PC-3 (cell line): ENCODE measurements at regions of chr20 and their contacts with region 1.

Region 1: DNA sequence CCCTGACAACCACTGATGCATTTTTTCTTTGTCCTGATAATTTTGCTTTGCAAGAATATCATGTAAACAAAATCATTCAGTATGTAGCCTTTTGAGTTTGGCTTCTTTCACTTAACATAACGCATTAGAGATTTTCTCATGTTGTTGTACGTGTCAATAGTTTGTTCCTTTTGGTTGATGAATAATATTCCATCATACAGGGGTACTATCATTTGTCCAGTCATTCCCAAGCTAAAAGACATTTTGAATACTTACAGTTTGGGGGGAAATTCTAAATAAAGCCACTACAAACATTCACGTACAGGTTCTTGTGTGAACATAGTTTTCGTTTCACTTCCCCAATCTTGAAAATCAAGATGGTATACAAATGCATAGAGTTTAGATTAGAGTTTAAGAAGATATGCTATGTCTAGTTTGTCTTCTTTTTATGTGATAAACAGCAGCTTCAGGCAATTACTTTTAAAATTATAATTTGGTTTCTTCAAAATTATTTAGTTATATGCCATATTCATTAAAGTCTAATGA is 5.2 kb downstream of the HAO1 start:
- DNase-seq: no peak
- ATAC-seq: no peak
- H3K4me3 ChIP-seq: no peak overlapping the region
- H3K27ac ChIP-seq: no peak overlapping the region
- H3K4me1 ChIP-seq: peaks cover 7% of the 10 kb centered on the region
- H3K27me3 ChIP-seq: peaks cover 3% of the 10 kb centered on the region; the same call in 1 of the 2 replicates
- CTCF ChIP-seq: no peak

Region 2: GRCh38 chr20:7866285-7866684 is 68.8 kb before region 1 on chr20:
- CTCF ChIA-PET with region 1: no interaction called
- POLR2A ChIA-PET with region 1: no interaction called
- intact Hi-C with region 1: no loop called
- DNase-seq: no peak
- ATAC-seq: no peak
- H3K4me3 ChIP-seq: no peak overlapping the region
- H3K27ac ChIP-seq: no peak overlapping the region
- H3K4me1 ChIP-seq: no peaks in the 10 kb centered on the region
- H3K27me3 ChIP-seq: no peaks in the 10 kb centered on the region
- CTCF ChIP-seq: no peak

Region 3: DNA sequence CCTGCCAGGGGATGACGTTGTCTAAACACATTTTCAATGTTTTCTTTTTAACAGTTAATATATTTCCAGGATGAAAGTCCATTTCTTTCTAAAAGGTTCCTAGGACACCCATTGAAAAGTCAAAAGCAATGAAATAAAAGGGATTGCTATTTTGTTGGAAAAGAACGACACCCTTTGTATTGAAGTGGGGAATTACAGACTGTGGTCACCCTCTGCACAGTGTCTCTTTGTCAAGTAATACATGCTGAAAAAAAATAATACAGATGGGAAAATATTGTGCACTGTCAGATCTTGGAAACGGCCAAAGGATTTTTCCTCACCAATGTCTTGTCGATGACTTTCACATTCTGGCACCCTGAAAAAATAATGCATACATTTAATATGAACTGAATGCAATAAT is 51.8 kb before region 1 on chr20:
- CTCF ChIA-PET with region 1: no interaction called
- POLR2A ChIA-PET with region 1: no interaction called
- intact Hi-C with region 1: no loop called
- DNase-seq: no peak
- ATAC-seq: no peak
- H3K4me3 ChIP-seq: no peak overlapping the region
- H3K27ac ChIP-seq: no peak overlapping the region
- H3K4me1 ChIP-seq: peaks cover 17% of the 10 kb centered on the region
- H3K27me3 ChIP-seq: no peaks in the 10 kb centered on the region
- CTCF ChIP-seq: no peak

Region 4: DNA sequence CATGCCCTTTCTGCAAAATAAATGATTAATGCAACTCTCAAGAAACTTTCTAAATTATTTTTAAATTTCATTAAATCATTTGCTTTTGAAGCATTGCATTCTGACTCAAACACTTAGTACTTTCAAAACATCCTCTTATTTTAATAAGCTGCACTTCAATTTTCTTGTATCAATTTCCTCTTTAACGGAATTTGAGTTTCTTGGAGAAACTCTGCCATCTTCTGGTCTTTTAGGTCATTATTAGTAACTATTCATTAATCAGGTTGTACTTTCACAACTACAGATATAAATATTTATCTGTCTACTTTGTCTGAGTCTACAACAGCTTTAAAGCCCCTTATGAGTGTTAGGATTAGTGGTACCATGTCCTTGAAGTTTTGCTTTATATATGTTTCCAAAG is 54.3 kb after region 1 on chr20:
- CTCF ChIA-PET with region 1: interaction called, 20 read pairs
- POLR2A ChIA-PET with region 1: no interaction called
- intact Hi-C with region 1: loop called (anchors 1 kb)
- DNase-seq: peak; percentile 35
- ATAC-seq: no peak
- H3K4me3 ChIP-seq: no peak overlapping the region
- H3K27ac ChIP-seq: no peak overlapping the region
- H3K4me1 ChIP-seq: peaks cover 13% of the 10 kb centered on the region
- H3K27me3 ChIP-seq: no peaks in the 10 kb centered on the region
- CTCF ChIP-seq: peak; percentile 47